ENCODE measurements at regions of chr11 and their contacts with region 1.

Region 1: GRCh38 chr11:2151500-2152257 is 9.3 kb downstream of the INS start:
- DNase-seq: peak; percentile 91
- ATAC-seq: peak; percentile 50
- H3K4me3 Mint-ChIP-seq: no peak overlapping the region
- H3K27ac Mint-ChIP-seq: no peak overlapping the region
- H3K4me1 Mint-ChIP-seq: peaks cover 13% of the 10 kb centered on the region
- H3K27me3 Mint-ChIP-seq: peaks cover 45% of the 10 kb centered on the region
- CTCF ChIP-seq: peak; percentile 89

Region 2: DNA sequence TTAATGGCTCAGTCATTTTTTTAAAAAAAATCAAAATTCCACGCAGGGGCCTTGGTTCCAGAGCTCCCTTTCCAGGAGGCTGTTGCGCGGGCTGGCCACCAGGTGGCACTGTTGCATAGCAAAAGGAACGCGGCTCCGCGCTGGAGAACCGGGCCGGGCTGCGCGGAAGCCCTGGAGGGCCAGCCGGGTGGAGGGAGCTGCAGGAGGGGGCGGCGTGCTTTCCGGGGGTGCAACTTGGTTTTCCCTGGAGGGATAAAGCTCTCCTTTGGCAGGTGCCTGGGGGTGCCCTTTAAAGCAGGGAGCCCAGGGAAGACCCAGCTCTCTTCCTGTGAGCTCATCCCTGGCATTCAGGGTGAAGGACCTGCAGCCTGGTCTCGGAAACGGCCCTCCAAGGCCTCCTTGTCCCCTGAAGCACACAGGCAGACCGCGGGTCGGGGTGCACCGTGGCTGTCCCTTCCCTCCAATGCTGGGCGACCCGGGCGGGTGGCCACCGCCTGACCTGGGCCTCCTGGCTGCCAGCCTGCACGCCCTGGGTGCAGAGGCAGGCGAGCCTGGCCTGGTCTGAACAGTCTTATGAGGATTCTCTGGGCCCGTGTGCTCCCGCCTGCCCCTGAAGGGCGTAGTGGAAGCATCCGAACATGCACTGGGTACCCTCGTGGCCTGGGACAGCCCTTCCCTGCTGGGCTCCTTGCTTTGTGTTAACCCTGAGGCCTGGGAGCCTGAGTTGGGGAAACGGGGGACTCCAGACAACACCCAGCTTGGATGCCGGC is 498.7 kb before region 1 on chr11:
- CTCF ChIA-PET with region 1: interaction called, 107 read pairs
- POLR2A ChIA-PET with region 1: no interaction called
- DNase-seq: peak; percentile 88
- ATAC-seq: peak; percentile 82
- H3K4me3 Mint-ChIP-seq: no peak overlapping the region
- H3K27ac Mint-ChIP-seq: no peak overlapping the region
- H3K4me1 Mint-ChIP-seq: no peaks in the 10 kb centered on the region
- H3K27me3 Mint-ChIP-seq: peaks cover 21% of the 10 kb centered on the region
- CTCF ChIP-seq: peak; percentile 99

Region 3: GRCh38 chr11:1845561-1846452 is 305.9 kb before region 1 on chr11:
- CTCF ChIA-PET with region 1: interaction called, 21 read pairs
- POLR2A ChIA-PET with region 1: no interaction called
- DNase-seq: no peak
- ATAC-seq: no peak
- H3K4me3 Mint-ChIP-seq: no peak overlapping the region
- H3K27ac Mint-ChIP-seq: no peak overlapping the region
- H3K4me1 Mint-ChIP-seq: no peaks in the 10 kb centered on the region
- H3K27me3 Mint-ChIP-seq: peaks cover 2% of the 10 kb centered on the region; the same call in 1 of the 2 replicates
- CTCF ChIP-seq: no peak

Region 4: GRCh38 chr11:1917671-1918516 is 233.8 kb before region 1 on chr11:
- CTCF ChIA-PET with region 1: interaction called, 12 read pairs
- POLR2A ChIA-PET with region 1: no interaction called
- DNase-seq: peak; percentile 49
- ATAC-seq: peak; percentile 86
- H3K4me3 Mint-ChIP-seq: no peak overlapping the region
- H3K27ac Mint-ChIP-seq: no peak overlapping the region
- H3K4me1 Mint-ChIP-seq: no peaks in the 10 kb centered on the region
- H3K27me3 Mint-ChIP-seq: no peaks in the 10 kb centered on the region; the same call in 1 of the 2 replicates
- CTCF ChIP-seq: peak; percentile 55; the same call in 1 of the 2 replicates

Region 5: GRCh38 chr11:1983601-1983961 is 168.1 kb before region 1 on chr11:
- CTCF ChIA-PET with region 1: interaction called, 15 read pairs
- POLR2A ChIA-PET with region 1: no interaction called
- DNase-seq: no peak
- ATAC-seq: no peak
- H3K4me3 Mint-ChIP-seq: no peak overlapping the region
- H3K27ac Mint-ChIP-seq: no peak overlapping the region
- H3K4me1 Mint-ChIP-seq: no peaks in the 10 kb centered on the region
- H3K27me3 Mint-ChIP-seq: no peaks in the 10 kb centered on the region
- CTCF ChIP-seq: no peak

Region 6: GRCh38 chr11:2074266-2074825 is 77.3 kb before region 1 on chr11:
- CTCF ChIA-PET with region 1: interaction called, 17 read pairs
- POLR2A ChIA-PET with region 1: interaction called, 4 read pairs
- DNase-seq: peak; percentile 60
- ATAC-seq: peak; percentile 84
- H3K4me3 Mint-ChIP-seq: no peak overlapping the region
- H3K27ac Mint-ChIP-seq: no peak overlapping the region
- H3K4me1 Mint-ChIP-seq: no peaks in the 10 kb centered on the region
- H3K27me3 Mint-ChIP-seq: peaks cover 20% of the 10 kb centered on the region
- CTCF ChIP-seq: peak; percentile 78

Region 7: GRCh38 chr11:2166091-2166851 is 14.6 kb after region 1 on chr11:
- CTCF ChIA-PET with region 1: interaction called, 37 read pairs
- POLR2A ChIA-PET with region 1: interaction called, 3 read pairs
- DNase-seq: peak; percentile 75
- ATAC-seq: peak; percentile 76
- H3K4me3 Mint-ChIP-seq: no peak overlapping the region
- H3K27ac Mint-ChIP-seq: no peak overlapping the region
- H3K4me1 Mint-ChIP-seq: no peaks in the 10 kb centered on the region
- H3K27me3 Mint-ChIP-seq: no peaks in the 10 kb centered on the region
- CTCF ChIP-seq: no peak; the same call in 1 of the 2 replicates

Measured in WTC11 (cell line).